AG04450 (cell line): ENCODE measurements at regions of chr12 and their contacts with region 1.

Region 1: DNA sequence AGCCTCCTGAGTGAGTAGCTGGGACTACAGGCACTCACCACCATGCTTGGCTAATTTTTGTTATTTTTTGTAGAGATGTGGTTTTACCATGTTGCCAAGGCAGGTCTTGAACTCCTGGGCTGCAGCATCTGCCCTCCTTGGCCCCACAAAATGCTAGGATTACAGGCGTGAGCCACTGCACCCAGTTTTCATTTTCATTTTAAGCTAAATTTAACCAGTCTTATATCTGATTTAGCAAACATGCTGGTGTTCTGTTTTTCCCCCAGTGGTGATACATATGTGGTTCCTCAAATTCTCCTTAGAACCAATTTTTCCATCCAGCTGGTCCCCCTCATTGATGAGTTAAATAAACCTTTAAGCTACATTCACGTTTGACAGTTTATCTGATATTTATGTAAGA is 43.8 kb upstream of the BICD1 start:
- DNase-seq: no peak
- H3K4me3 ChIP-seq: no peak overlapping the region
- H3K27ac ChIP-seq: no peak overlapping the region
- H3K27me3 ChIP-seq: no peaks in the 10 kb centered on the region
- CTCF ChIP-seq: no peak

Region 2: GRCh38 chr12:31647086-31647491 is 415.8 kb before region 1 on chr12:
- CTCF ChIA-PET with region 1: interaction called, 16 read pairs
- POLR2A ChIA-PET with region 1: no interaction called
- DNase-seq: no peak
- H3K4me3 ChIP-seq: no peak overlapping the region
- H3K27ac ChIP-seq: no peak overlapping the region
- H3K27me3 ChIP-seq: no peaks in the 10 kb centered on the region
- CTCF ChIP-seq: no peak

Region 3: GRCh38 chr12:32043928-32044549 is 18.8 kb before region 1 on chr12:
- CTCF ChIA-PET with region 1: interaction called, 33 read pairs
- POLR2A ChIA-PET with region 1: no interaction called
- DNase-seq: no peak
- H3K4me3 ChIP-seq: no peak overlapping the region
- H3K27ac ChIP-seq: no peak overlapping the region
- H3K27me3 ChIP-seq: no peaks in the 10 kb centered on the region
- CTCF ChIP-seq: no peak

Region 4: DNA sequence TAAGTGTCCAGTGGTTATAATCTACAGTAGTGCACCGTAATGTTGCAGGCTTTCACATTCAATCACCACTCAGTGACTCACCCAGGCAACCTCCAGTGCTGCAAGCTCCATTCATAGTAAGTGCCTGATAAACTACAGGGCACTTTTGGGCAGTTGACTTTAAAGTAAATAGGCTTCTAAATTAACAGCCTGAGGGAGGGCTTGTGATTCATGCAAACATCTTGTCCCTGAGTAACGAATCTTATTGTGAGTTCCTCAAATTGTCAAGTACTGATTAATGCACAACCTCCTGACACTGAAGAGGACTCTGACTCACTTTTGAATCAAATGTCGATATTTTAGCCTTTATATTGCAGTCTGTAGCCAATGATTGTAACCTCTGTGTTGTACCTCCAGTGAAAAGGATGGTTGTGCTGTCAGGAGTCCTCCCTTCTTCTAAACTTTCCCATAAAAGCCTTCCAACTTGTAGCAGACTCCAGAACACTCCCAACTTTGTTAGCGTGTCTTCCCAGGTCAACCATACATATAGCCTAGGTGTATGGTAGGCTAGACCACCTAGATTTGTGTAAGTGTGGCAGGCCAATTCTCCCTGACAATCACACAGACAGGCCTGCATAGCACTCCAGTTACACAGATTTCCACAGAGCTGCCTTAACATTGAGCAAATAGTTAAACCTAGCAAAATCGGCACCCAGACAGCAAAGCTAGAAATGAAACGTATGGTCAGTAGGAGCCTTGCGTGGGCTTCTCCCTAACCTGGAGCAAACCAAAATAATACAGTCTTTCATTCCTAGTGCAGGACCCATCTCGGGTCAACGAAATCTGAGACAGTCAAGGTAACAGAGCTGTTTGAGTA is 11.1 kb before region 1 on chr12:
- CTCF ChIA-PET with region 1: interaction called, 33 read pairs
- POLR2A ChIA-PET with region 1: no interaction called
- DNase-seq: peak; percentile 60
- H3K4me3 ChIP-seq: no peak overlapping the region
- H3K27ac ChIP-seq: peak overlapping the region; percentile 75
- H3K27me3 ChIP-seq: no peaks in the 10 kb centered on the region
- CTCF ChIP-seq: no peak

Region 5: GRCh38 chr12:32076941-32077340 is 14.1 kb after region 1 on chr12:
- CTCF ChIA-PET with region 1: interaction called, 40 read pairs
- POLR2A ChIA-PET with region 1: no interaction called
- DNase-seq: no peak
- H3K4me3 ChIP-seq: no peak overlapping the region
- H3K27ac ChIP-seq: no peak overlapping the region
- H3K27me3 ChIP-seq: no peaks in the 10 kb centered on the region
- CTCF ChIP-seq: no peak

Region 6: GRCh38 chr12:32312049-32312670 is 249.3 kb after region 1 on chr12:
- CTCF ChIA-PET with region 1: interaction called, 85 read pairs
- POLR2A ChIA-PET with region 1: interaction called, 3 read pairs
- DNase-seq: peak; percentile 46
- H3K4me3 ChIP-seq: no peak overlapping the region
- H3K27ac ChIP-seq: no peak overlapping the region
- H3K27me3 ChIP-seq: no peaks in the 10 kb centered on the region
- CTCF ChIP-seq: peak; percentile 64

Region 7: DNA sequence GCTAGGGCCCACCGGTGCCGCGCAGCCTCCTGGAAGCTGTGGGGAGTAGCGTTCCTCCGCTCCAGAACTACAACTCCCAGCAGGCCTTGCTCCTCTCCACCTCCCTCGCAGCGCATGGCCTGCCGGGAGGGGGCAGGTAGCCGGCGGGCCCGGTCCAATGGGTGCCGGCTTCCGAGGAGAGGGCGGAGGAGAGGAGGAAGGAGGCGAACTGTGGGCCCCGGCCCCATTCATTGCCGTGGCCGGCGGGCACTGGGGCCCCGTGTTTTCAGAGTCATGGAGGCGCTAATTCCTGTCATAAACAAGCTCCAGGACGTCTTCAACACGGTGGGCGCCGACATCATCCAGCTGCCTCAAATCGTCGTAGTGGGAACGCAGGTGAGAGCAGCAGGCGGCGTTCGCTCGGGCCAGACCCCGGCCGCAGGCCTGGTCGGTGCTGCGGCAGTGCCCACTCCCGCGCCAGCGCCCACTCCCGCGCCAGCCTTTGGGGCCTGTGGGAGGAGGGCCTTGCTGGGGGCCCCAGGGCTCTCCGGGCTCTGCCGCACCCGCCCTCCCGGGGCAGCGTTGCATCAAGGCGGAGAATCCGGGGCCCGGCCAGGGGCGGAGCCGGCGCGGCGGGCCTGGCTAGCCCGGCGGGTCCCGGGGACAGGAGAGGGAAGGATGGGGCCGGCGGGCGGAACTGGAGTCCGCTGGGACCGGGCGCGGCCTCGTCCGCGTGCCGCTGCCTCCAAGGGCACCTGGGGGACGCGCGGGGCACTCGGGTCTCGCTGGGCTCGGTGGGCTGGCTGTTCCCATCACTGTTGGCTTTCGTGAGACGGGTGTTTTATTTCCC is 616.4 kb after region 1 on chr12 and contains the start of gene DNM1L:
- CTCF ChIA-PET with region 1: no interaction called
- POLR2A ChIA-PET with region 1: interaction called, 10 read pairs
- DNase-seq: peak; percentile 90
- H3K4me3 ChIP-seq: peak within 1 kb of the TSS; percentile 85
- H3K27ac ChIP-seq: peak within 1 kb of the TSS; percentile 80
- H3K27me3 ChIP-seq: no peaks in the 10 kb centered on the region
- CTCF ChIP-seq: no peak
- polyA plus RNA-seq, gene DNM1L: 49.1 and 68.2 TPM in 2 replicates